PC-9 (cell line): ENCODE measurements at regions of chr11 and their contacts with region 1.

Region 1: DNA sequence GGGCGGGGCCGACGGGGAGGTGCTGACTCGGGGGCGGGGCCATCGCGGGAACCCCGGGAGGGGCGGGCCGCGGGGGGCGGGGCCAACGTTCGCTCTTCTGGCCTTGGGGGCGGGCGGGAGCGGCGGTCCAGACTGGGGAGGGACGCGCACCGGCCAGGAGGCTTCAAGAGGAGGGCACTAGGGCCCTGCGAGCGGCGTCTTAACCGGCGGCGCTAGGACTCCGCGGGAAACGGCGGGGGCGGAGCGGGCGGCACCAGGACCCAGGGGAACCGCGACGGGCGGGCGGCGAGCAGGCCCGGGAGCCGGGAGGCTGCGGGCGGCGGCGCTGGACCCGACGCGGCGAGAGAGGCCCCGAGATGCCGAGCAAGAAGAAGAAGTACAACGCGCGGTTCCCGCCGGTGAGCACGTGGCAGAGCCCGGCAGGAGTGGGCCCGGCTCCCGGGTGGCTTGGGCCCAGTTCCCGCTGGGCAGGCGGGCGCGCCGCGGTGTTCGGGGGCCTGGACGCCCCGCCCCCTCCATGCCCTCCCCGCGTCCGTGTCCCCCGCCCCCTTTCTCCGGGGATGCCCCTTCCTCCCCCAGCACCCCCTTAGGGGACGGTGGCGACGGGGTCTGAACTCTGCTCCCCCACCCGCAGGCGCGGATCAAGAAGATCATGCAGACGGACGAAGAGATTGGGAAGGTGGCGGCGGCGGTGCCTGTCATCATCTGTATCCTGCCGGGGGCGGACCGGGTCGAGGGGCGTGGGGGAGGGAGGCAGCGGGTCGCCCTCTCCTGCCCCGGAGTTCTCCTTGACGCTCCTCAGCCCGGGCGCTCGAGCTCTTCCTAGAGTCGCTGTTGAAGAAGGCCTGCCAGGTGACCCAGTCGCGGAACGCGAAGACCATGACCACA is at the start of gene DRAP1:
- DNase-seq: peak; percentile 91 to 99
- H3K4me3 ChIP-seq: peak within 1 kb of the TSS; percentile 89
- H3K27ac ChIP-seq: peak within 1 kb of the TSS; percentile 90
- H3K4me1 ChIP-seq: peaks cover 48% of the 10 kb centered on the region
- H3K27me3 ChIP-seq: no peaks in the 10 kb centered on the region
- CTCF ChIP-seq: no peak
- total RNA-seq, gene DRAP1: 196 and 220 TPM in 2 replicates

Region 2: DNA sequence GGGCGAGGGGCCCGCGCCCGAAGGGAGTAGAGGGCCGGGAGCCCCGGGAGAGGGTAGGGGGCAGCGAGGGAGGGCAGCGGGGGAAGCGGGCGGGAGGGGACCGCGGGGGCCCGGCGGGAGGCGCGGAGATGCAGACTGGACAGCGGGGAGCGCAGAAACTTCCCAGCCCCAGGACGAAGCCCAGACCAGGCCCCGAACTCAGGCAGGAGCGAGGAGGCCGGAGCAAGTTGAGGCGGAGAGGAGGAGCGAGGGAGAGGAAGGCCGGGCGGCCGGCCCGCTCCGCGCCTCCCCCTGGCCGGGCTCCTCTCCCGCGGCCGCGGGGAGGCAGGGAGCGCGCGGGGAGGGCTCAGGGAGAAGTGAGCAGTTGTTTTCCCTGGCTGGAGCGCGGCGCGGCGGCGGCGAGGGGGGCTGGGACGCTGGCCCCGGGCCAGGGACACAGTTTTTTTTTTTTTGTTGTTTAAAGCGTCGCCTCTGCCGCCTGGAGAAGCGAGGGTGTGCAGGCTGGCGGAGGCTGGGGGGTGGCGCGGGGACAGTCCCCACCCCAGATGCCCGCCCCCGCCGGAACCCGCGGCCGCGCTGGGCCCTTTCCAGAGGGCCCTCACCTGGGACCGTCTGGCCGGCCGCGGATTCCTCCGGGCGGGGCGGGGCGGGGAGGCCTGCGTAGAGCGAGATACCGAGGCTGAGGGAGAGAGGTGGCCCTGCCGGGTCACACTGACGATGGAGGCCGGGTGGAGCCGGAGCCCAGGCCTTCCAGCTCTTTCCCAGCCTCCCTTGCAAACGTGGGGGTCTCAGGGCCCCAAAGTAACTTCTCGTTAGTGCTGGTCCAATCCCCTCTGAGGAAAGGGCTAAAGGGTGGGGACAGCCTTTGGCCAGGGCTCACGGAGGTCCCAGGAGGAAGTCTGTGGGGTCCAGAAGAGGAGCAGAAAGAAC is 361.1 kb before region 1 on chr11 and contains the start of gene LTBP3:
- CTCF ChIA-PET with region 1: no interaction called
- POLR2A ChIA-PET with region 1: no interaction called
- intact Hi-C with region 1: loop called (anchors 5 kb)
- DNase-seq: peak; percentile 71 to 92
- H3K4me3 ChIP-seq: peak within 1 kb of the TSS; percentile 77
- H3K27ac ChIP-seq: peak within 1 kb of the TSS; percentile 69
- H3K4me1 ChIP-seq: peaks cover 71% of the 10 kb centered on the region
- H3K27me3 ChIP-seq: no peaks in the 10 kb centered on the region
- CTCF ChIP-seq: no peak
- total RNA-seq, gene LTBP3: 455 and 553 TPM in 2 replicates

Region 3: DNA sequence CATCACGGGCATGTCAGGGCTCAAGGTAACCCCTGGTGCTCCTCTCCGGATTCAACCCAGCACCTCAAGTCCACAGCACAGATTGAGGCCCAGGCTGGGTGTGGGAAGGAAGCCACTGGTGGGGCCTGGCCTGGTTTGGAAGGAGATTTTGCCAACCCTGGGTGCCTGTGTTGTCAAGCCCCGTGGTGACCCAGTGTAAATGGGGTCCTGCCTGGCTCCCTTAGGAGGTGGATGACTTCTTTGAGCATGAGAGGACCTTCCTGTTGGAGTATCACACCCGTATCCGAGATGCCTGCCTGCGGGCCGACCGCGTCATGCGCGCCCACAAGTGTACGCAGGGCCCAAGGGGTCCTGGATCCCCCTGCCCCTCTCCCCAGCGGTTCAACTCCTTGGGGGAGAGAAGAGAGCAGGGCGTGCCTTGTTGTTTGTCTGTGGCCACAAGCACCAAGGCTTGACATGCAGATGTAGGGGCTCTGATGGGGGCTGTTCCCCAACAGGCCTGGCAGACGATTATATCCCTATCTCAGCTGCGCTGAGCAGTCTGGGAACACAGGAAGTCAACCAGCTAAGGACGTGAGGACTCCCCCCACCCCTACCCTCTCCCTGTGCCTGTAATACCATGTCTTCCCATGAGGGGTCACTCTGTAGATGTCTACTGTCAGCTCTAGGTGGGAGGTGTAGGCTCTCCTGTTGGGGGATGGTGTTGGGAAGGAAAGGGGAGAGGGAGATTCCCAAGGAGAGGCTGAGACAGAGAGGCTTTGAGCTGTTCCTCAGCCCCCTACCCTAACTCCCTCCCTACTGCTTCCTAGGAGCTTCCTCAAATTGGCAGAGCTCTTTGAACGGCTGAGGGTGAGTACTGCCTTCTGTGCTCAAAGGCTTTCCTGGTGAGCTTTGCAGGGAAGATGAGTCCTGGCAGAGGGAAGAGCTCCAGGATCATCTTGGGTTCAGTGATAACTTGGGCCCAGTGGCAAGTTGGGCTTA is 68.3 kb before region 1 on chr11:
- CTCF ChIA-PET with region 1: no interaction called
- POLR2A ChIA-PET with region 1: interaction called, 14 read pairs
- intact Hi-C with region 1: no loop called
- DNase-seq: peak in 1 of 2 experiments; percentile 35
- H3K4me3 ChIP-seq: no peak overlapping the region
- H3K27ac ChIP-seq: no peak overlapping the region
- H3K4me1 ChIP-seq: peaks cover 5% of the 10 kb centered on the region
- H3K27me3 ChIP-seq: no peaks in the 10 kb centered on the region
- CTCF ChIP-seq: peak; percentile 79

Region 4: DNA sequence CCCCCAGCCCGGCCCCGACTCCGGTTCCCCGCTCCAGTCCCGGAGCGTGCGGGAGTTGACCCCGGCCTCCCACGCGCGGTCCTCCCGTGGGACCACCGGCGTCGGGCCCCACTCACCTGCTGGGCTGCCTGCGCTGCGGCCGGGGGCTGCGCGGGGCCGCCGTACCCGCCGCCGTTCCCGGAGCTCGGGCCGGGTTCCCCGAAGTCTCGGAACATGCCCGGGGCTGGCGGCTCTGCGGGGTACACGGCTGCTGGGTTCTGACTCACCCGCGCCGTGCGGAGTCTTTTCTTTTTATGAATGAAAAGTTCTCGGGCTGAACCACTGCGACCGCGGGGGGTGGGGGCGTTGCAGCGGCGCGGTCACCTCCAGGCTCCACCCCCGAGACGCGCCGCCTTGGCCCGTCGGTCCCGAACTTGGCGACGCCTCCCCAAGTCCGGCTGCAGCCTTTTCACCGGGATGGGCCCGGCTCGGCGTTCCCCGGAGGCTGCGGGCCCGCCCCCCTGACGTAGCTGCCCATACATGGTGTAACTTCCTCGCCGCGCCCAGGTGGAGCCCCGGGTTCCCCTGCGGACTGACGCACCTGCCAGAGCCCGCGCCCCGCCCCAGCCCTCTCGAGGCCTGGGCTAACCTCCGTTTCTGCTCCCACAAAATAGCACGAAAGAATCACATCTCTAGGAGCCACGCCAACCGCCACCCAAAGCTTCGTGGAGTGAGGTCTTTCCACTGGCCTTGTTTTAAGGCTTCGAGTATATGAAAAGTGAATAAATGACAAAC is 19.1 kb before region 1 on chr11 and contains the start of gene FOSL1:
- CTCF ChIA-PET with region 1: interaction called, 12 read pairs
- POLR2A ChIA-PET with region 1: interaction called, 34 read pairs
- intact Hi-C with region 1: loop called (anchors 1 kb)
- DNase-seq: peak; percentile 97 to 100
- H3K4me3 ChIP-seq: peak within 1 kb of the TSS; percentile 96
- H3K27ac ChIP-seq: peak within 1 kb of the TSS; percentile 95
- H3K4me1 ChIP-seq: peaks cover 71% of the 10 kb centered on the region
- H3K27me3 ChIP-seq: no peaks in the 10 kb centered on the region
- CTCF ChIP-seq: no peak
- total RNA-seq, gene FOSL1: 58.8 and 69.9 TPM in 2 replicates

Region 5: GRCh38 chr11:65906602-65907001 is 12.8 kb before region 1 on chr11:
- CTCF ChIA-PET with region 1: interaction called, 10 read pairs
- POLR2A ChIA-PET with region 1: interaction called, 7 read pairs
- intact Hi-C with region 1: loop called (anchors 1 kb)
- DNase-seq: no peak
- H3K4me3 ChIP-seq: no peak overlapping the region
- H3K27ac ChIP-seq: peak overlapping the region; percentile 42
- H3K4me1 ChIP-seq: peaks cover 70% of the 10 kb centered on the region
- H3K27me3 ChIP-seq: no peaks in the 10 kb centered on the region
- CTCF ChIP-seq: no peak

Region 6: GRCh38 chr11:65961232-65961901 is 42.0 kb after region 1 on chr11 and contains the start of gene SART1:
- CTCF ChIA-PET with region 1: no interaction called
- POLR2A ChIA-PET with region 1: no interaction called
- intact Hi-C with region 1: loop called (anchors 1 kb)
- DNase-seq: peak; percentile 94 to 97
- H3K4me3 ChIP-seq: peak within 1 kb of the TSS; percentile 71
- H3K27ac ChIP-seq: peak within 1 kb of the TSS; percentile 63
- H3K4me1 ChIP-seq: peaks cover 13% of the 10 kb centered on the region
- H3K27me3 ChIP-seq: no peaks in the 10 kb centered on the region
- CTCF ChIP-seq: no peak
- total RNA-seq, gene SART1: 74.6 and 78.8 TPM in 2 replicates